Left lung (tissue), 14 donors: ENCODE measurements at regions of chr10 and their contacts with region 1.

Region 1: DNA sequence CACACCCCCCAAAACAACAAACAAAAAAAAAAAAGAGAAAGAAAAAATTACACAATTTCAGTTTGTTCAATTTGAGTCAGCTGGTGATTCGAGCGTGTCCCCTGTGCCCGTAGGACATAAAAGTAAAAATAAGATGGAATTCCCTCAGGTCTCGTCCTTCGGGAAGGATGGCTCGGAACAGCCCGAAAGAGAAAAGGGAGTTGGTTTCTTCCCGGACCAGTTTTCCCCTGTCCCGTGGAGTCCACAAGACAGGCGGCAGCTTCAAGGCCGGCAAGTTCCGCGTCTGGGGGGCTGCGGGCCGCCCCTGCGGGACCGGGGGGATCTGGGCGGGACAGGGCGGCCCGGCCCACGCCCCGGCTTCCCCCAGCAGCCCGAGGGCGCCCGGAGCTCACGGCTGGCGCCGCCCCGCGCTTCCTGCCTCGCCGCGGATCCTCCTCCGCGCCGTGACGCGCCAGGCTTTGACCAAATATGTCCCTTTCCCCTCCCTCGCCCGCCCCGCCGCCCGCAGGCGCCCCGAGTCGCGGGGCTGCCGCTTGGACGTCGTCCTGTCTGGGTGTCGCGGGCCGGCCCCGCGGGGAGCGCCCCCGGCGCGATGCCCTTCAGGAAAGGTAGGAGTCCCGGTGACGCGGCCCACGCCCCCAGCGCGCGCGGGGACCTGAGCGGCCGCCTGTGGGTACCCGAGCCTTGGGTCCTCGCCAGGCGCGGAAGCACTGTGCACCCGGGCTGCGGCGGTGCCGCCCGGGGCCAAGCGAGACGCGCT is 55.8 kb downstream of the RBM17 start:
- DNase-seq: peak; percentile 83 to 99 (median 92)
- ATAC-seq: peak; percentile 96
- H3K4me3 ChIP-seq: peak overlapping the region; percentile 91 to 94
- H3K27ac ChIP-seq: peak overlapping the region; percentile 82 to 92
- H3K4me1 ChIP-seq: peaks cover 9 to 75% of the 10 kb centered on the region in 2 donors
- H3K27me3 ChIP-seq: peaks cover 0 to 7% of the 10 kb centered on the region in 2 donors
- CTCF ChIP-seq: peak in 1 of 2 donors; percentile 17

Region 2: GRCh38 chr10:6114805-6115341 is 29.7 kb before region 1 on chr10:
- intact Hi-C with region 1: loop called in 1 of 2 experiments (anchors 5 kb)
- DNase-seq: no peak
- ATAC-seq: no peak
- H3K4me3 ChIP-seq: no peak overlapping the region
- H3K27ac ChIP-seq: peak overlapping the region; percentile 0 to 41
- H3K4me1 ChIP-seq: peaks cover 0 to 13% of the 10 kb centered on the region in 2 donors
- H3K27me3 ChIP-seq: no peaks in the 10 kb centered on the region
- CTCF ChIP-seq: no peak

Region 3: GRCh38 chr10:6464862-6465430 is 320.4 kb after region 1 on chr10:
- intact Hi-C with region 1: no loop called
- DNase-seq: no peak
- ATAC-seq: no peak
- H3K4me3 ChIP-seq: no peak overlapping the region
- H3K27ac ChIP-seq: no peak overlapping the region
- H3K4me1 ChIP-seq: no peaks in the 10 kb centered on the region
- H3K27me3 ChIP-seq: no peaks in the 10 kb centered on the region
- CTCF ChIP-seq: no peak